A549 (cell line): ENCODE measurements at regions of chr18 and their contacts with region 1.

Region 1: DNA sequence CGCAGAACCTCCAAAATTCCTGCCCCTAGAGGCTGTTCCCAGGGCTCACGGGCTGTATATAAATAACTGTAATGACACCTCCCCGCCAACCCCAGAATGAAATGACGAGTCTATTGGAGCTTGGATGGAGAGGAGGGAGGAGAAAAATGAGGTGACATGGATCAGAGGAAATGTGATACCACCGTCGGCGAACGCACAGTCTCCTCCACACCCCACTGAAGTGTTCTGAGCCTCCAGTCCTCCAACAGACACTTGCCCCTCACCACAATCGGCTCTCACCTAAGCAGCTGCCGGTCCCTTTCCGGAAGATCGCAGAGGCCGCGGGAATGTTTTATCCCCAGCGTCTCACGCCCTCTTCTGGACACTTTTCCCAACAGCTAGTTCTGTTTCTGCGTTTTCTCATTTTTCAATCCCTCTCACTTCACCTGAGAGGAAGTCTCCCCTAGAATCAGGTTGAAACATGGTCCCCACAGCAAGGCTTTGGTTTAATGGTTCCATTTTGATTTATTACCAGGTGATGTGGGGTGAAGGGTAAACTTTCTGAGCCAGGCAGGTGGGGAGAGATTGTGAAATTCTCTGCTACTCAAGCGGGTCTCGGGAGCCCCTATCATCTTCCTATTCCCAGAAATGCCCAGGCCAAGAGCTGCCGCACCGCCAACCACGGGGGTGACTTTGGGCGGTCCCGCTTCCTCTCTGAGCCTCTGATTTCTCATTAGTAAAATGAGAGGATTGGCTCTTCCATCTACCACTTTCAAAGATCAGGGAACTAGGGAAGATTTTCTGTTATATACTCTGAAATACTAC is 9.1 kb upstream of the MYO5B start:
- DNase-seq: peak; percentile 24 to 28
- ATAC-seq: peak; percentile 59 to 76; a peak in 4 of 6 replicates
- H3K4me3 ChIP-seq: no peak overlapping the region
- H3K27ac ChIP-seq: no peak overlapping the region
- H3K4me1 ChIP-seq: no peaks in the 10 kb centered on the region
- CTCF ChIP-seq: peak; percentile 51
- EP300 ChIP-seq: no peak
- POLR2A ChIP-seq: no peak
- RAD21 ChIP-seq: peak; percentile 46 to 56; a peak in 4 of 5 replicates

Region 2: DNA sequence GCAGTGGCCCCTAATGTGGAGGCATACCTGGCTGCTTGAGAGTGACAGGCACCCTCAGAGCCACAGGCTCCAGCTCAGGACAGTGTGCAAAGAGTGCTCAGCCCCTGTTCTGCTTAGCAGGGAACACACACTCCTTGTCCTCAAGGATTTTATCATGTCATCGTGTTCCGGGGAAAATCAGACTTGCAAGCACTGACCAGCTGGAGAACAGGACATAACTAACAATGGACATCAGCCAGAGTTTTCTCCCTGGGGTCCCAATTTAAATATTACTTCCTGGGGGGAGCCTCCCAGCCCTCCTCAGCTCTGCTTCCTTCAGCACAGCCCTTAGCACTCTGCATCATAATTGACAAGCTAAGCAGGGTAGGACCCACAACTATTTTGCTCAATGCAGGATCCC is 215.3 kb before region 1 on chr18:
- CTCF ChIA-PET with region 1: no interaction called
- POLR2A ChIA-PET with region 1: no interaction called
- DNase-seq: no peak
- ATAC-seq: no peak
- H3K4me3 ChIP-seq: no peak overlapping the region
- H3K27ac ChIP-seq: no peak overlapping the region
- H3K4me1 ChIP-seq: no peaks in the 10 kb centered on the region
- CTCF ChIP-seq: no peak
- EP300 ChIP-seq: no peak
- POLR2A ChIP-seq: no peak
- RAD21 ChIP-seq: no peak

Region 3: DNA sequence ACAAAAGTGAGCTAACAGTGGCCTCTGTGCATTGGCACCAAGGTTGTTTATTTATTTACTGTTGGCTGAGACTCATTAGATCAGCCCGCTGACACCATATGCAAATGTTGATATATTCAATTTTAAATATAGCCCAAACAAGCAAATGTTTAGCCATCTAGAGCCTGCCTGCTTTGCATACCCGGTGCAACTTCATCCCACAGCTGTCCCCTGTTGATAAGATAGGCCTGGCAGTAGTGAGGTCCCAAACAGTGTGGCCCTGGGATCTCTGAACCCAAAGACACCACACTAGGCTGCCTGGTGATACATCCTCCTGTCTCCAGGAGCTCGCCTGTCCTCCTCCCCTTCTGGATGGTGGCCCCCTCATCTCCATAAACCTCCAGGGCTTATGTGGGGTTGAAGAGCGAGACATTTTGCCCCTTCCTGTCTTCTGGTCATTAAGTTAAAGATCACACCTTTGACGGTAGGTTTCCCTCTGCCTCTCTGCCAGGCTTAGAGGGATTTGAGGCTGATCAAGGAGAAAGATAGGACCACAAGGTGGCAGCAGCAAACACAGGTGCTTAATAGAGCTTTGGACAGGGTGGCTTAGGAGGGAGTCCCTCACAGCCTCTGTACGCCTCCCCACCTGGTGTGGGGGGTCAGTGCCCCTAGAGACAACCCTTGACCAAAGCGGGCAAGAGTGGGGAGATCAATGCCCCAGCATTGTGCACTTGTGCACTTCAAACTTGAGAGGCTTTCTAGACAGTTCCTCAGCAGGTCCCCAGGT is 14.6 kb after region 1 on chr18:
- CTCF ChIA-PET with region 1: interaction called, 10 read pairs
- POLR2A ChIA-PET with region 1: no interaction called
- DNase-seq: peak in 1 of 2 experiments; percentile 40
- ATAC-seq: peak; percentile 81 to 87; a peak in 5 of 6 replicates
- H3K4me3 ChIP-seq: no peak overlapping the region
- H3K27ac ChIP-seq: no peak overlapping the region
- H3K4me1 ChIP-seq: no peaks in the 10 kb centered on the region
- CTCF ChIP-seq: peak; percentile 50
- EP300 ChIP-seq: no peak
- POLR2A ChIP-seq: no peak
- RAD21 ChIP-seq: peak; percentile 43 to 44; a peak in 4 of 5 replicates